Endothelial cell of umbilical vein (primary cell): ENCODE measurements at regions of chr2 and their contacts with region 1.

Region 1: DNA sequence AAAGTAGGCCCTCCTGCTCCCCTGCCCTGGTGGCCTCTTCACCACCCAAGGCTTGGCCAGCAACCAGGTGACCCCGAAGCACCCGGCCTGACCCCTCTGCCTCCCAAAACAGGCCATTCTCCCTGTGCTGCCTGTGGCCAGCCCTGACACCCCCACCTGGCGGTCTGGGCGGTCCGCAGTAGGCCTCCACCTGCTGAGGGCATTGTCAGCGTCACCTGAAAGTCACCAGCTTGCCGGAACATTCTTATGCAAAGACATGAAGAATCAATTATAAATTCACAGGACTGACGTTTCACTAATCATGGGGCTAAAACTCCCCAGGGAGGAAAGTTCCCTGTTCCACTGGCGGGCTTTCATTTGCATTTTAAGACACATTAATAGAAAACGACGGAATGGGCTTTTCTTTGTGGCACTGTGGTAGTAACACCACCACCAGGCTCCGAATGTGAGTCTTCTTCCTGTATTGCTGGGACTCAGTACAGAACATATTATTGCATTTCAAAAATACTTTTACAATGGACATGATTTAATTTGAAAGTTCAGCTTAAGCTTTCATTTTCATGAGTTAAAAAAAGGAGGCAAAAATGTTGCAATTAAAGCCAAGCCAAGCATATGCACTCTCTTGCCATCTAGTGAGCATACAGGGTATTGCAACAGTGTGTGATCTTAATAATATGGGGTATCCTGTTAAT is 57.4 kb downstream of the ADI1 start:
- DNase-seq: peak; percentile 58
- H3K4me3 ChIP-seq: no peak overlapping the region
- H3K27ac ChIP-seq: no peak overlapping the region
- H3K4me1 ChIP-seq: no peaks in the 10 kb centered on the region
- H3K27me3 ChIP-seq: no peaks in the 10 kb centered on the region
- CTCF ChIP-seq: peak; percentile 51 to 77
- POLR2A ChIP-seq: no peak

Region 2: GRCh38 chr2:3313781-3314375 is 148.1 kb before region 1 on chr2:
- CTCF ChIA-PET with region 1: no interaction called
- POLR2A ChIA-PET with region 1: no interaction called
- dilution Hi-C with region 1: no loop called
- intact Hi-C with region 1: no loop called
- DNase-seq: no peak
- H3K4me3 ChIP-seq: no peak overlapping the region
- H3K27ac ChIP-seq: no peak overlapping the region
- H3K4me1 ChIP-seq: no peaks in the 10 kb centered on the region
- H3K27me3 ChIP-seq: no peaks in the 10 kb centered on the region
- CTCF ChIP-seq: no peak
- POLR2A ChIP-seq: no peak

Region 3: DNA sequence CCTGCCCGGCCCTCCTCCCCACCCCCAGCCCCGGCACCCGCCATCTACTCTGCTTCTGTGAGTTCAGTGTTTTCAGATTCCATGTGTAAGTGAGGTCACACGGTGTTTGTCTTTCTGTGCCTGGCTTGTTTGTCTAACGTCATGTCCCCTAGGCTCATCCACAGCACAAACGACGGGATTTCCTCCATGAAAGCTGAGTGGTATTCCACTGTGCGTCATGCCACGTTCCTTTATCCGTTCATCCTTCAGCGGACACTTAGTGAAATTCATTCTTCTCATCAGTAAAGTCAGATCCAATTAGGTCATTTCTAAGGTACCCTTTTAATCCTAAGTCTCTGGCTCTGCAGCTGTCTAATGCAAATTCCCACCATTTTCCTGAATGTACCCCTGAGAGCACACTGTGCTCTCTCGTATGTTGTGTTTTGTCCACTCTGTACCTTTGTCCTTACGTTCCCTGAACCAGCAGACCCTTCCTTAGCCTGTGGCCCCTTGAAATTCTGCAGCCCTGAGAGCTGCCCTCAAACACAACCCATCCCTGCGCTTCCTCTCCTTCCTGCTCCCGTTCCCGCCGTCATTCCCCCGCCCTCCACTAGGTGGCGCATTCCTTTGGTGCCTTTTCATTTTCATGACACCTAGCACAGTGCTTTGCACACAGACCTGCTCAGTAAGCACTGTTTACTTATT is 38.3 kb before region 1 on chr2:
- CTCF ChIA-PET with region 1: interaction called, 72 read pairs
- POLR2A ChIA-PET with region 1: no interaction called
- dilution Hi-C with region 1: no loop called
- intact Hi-C with region 1: loop called (anchors 1 kb)
- DNase-seq: peak; percentile 63
- H3K4me3 ChIP-seq: no peak overlapping the region
- H3K27ac ChIP-seq: no peak overlapping the region
- H3K4me1 ChIP-seq: no peaks in the 10 kb centered on the region
- H3K27me3 ChIP-seq: no peaks in the 10 kb centered on the region
- CTCF ChIP-seq: peak; percentile 91 to 99
- POLR2A ChIP-seq: no peak

Region 4: DNA sequence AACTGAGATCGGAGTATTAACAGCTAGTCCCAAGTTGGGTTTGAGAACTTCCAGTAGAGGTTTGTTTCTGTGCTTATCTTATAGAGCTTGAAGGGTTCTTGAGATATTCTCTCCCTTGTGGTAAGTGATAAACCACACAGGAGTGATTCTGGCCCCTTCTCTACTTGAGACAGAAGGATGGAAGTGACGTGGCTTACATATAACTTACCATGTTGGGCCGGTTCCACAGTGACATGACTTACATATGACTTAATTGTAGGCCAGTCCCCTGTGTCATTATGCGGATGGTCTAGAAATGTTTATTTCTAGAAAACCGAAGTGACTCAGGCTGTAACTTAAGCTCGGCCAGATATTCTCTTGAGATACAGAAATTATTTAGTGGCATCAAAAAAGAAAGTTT is 19.8 kb before region 1 on chr2:
- CTCF ChIA-PET with region 1: interaction called, 18 read pairs
- POLR2A ChIA-PET with region 1: no interaction called
- dilution Hi-C with region 1: no loop called
- intact Hi-C with region 1: no loop called
- DNase-seq: no peak
- H3K4me3 ChIP-seq: no peak overlapping the region
- H3K27ac ChIP-seq: no peak overlapping the region
- H3K4me1 ChIP-seq: peaks cover 6% of the 10 kb centered on the region
- H3K27me3 ChIP-seq: no peaks in the 10 kb centered on the region
- CTCF ChIP-seq: no peak
- POLR2A ChIP-seq: no peak

Region 5: GRCh38 chr2:3505771-3506170 is 43.8 kb after region 1 on chr2:
- CTCF ChIA-PET with region 1: interaction called, 10 read pairs
- POLR2A ChIA-PET with region 1: no interaction called
- dilution Hi-C with region 1: no loop called
- intact Hi-C with region 1: no loop called
- DNase-seq: peak; percentile 83
- H3K4me3 ChIP-seq: no peak overlapping the region
- H3K27ac ChIP-seq: no peak overlapping the region
- H3K4me1 ChIP-seq: no peaks in the 10 kb centered on the region
- H3K27me3 ChIP-seq: no peaks in the 10 kb centered on the region
- CTCF ChIP-seq: no peak
- POLR2A ChIP-seq: no peak

Region 6: GRCh38 chr2:3827673-3828575 is 366.0 kb after region 1 on chr2:
- CTCF ChIA-PET with region 1: no interaction called
- POLR2A ChIA-PET with region 1: no interaction called
- dilution Hi-C with region 1: no loop called
- intact Hi-C with region 1: no loop called
- DNase-seq: no peak
- H3K4me3 ChIP-seq: no peak overlapping the region
- H3K27ac ChIP-seq: no peak overlapping the region
- H3K4me1 ChIP-seq: no peaks in the 10 kb centered on the region
- H3K27me3 ChIP-seq: no peaks in the 10 kb centered on the region
- CTCF ChIP-seq: peak; percentile 22 to 49
- POLR2A ChIP-seq: no peak

Region 7: DNA sequence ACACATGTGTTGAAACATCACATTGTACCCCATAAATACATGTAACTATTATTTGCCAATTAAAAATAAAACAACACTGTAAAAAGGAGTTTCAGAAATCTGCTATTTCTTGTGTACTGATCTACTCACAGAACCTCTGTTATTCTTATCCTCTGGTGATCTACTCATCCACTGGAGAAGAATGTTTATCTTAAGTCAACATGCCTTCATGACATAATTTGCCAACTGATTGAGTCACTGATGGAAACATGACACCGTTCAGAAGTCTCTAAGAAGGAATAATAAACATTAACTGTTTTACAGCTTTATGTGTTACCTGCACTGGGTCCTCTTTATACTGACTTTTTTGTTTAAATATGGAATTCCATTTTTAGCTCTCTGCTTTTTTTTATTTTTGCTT is 796.6 kb after region 1 on chr2:
- CTCF ChIA-PET with region 1: no interaction called
- POLR2A ChIA-PET with region 1: no interaction called
- dilution Hi-C with region 1: no loop called
- intact Hi-C with region 1: no loop called
- DNase-seq: peak; percentile 49
- H3K4me3 ChIP-seq: no peak overlapping the region
- H3K27ac ChIP-seq: no peak overlapping the region
- H3K4me1 ChIP-seq: no peaks in the 10 kb centered on the region
- H3K27me3 ChIP-seq: no peaks in the 10 kb centered on the region
- CTCF ChIP-seq: no peak
- POLR2A ChIP-seq: no peak